CD4-positive, alpha-beta memory T cell (primary cell): ENCODE measurements at regions of chr5 and their contacts with region 1.

Region 1: DNA sequence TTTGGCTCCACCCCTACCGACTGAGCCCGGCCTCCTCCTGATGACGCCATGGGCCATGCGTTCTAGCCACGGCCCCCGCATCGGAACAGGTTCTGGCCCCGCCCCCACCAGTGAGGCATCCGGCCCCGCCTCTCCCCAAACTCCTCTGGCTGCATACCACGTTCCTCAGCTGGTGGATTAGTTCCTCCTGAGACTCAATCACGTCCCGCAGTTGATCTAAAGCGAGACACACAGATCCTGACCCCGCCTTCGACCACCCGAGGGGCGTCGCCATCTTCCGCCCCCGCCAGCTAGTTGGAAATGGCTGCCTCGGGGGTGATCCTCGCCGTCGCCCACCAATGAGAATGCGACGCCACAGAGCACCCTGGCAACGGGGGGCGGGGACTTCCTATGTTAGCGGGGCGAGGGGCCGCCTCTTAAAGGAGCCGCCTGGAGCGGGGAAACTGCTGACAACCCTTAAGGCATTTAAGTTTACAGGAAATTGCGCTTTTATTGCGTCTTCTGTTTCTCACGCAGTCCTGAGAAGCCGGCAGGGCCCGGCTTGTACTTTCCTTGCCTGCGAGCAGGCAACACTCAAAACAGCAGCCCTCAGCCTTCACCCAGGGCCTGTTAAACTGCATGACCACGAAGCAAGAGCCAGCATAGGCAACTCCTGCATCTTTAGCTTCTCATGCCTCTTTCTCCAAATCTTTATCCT is at the start of gene SPATA24:
- DNase-seq: peak; percentile 97 to 98 (median 98)
- H3K4me3 ChIP-seq: peak within 1 kb of the TSS; percentile 71 to 90
- H3K4me3 Mint-ChIP-seq: peak within 1 kb of the TSS; percentile 91 to 99 (median 94)
- H3K27ac ChIP-seq: peak within 1 kb of the TSS; percentile 85
- H3K27ac Mint-ChIP-seq: peak within 1 kb of the TSS; percentile 91 to 100 (median 99)
- H3K4me1 ChIP-seq: peaks cover 20% of the 10 kb centered on the region
- H3K4me1 Mint-ChIP-seq: peaks cover 16 to 31% (median 22%) of the 10 kb centered on the region in 4 donors
- H3K27me3 ChIP-seq: no peaks in the 10 kb centered on the region
- H3K27me3 Mint-ChIP-seq: no peaks in the 10 kb centered on the region
- total RNA-seq, gene SPATA24: 5.6 to 7.5 TPM

Region 2: DNA sequence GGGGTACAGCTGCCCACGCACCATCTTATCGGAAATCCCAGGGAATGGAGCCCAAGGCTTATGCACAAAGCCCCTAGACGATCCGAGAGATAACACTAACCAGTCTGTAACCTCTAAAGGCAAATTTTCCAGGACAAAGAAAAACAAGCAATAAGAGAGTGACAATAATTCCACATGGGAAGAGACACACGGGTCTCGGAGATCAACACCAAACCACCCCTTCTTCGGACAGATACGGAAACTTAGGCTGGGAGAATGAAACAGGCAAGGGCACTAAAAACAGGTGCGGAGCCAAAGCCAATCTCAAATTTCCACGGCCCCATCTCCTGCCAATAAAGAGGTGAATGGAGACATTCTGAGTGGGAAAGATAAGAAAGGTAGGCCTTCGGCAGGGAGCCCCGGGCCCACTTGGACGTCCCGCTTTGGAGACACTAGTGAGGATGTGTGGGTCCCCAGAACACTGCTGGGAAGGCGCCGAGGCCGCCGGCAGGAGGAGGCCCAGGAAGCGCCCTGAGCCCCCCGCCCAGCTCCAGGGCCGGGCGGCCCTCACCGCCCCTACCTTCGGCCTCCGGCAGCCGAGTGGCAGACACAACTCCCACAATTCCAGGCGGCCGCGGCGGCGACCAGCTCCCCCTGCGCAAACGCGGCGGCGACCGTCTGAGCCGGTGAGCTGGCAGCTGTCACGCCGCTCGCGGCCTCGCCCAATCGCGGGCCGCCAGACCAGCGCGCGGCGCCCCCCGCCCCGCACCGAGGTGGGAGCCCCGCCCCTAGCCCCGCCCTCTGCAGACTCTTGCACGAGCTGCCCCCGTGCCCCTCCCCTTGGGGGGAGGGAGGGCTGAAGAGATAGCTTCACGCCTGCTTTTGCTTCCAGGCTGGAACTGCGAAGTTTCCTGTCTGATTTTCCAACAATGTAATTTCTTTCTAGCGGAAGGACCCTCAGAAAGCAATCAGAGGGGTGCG is 205.9 kb before region 1 on chr5 and contains the start of gene SIL1:
- CTCF ChIA-PET with region 1: no interaction called
- POLR2A ChIA-PET with region 1: no interaction called
- intact Hi-C with region 1: loop called (anchors 5 kb)
- DNase-seq: peak; percentile 90 to 93 (median 91)
- H3K4me3 ChIP-seq: peak within 1 kb of the TSS; percentile 59 to 69
- H3K4me3 Mint-ChIP-seq: peak within 1 kb of the TSS; percentile 87 to 95 (median 89)
- H3K27ac ChIP-seq: peak within 1 kb of the TSS; percentile 86
- H3K27ac Mint-ChIP-seq: peak within 1 kb of the TSS; percentile 84 to 98 (median 94)
- H3K4me1 ChIP-seq: peaks cover 13% of the 10 kb centered on the region
- H3K4me1 Mint-ChIP-seq: peaks cover 13 to 29% (median 19%) of the 10 kb centered on the region in 4 donors
- H3K27me3 ChIP-seq: no peaks in the 10 kb centered on the region
- H3K27me3 Mint-ChIP-seq: no peaks in the 10 kb centered on the region
- total RNA-seq, gene SIL1: 16.4 to 16.7 TPM

Region 3: GRCh38 chr5:139415221-139415861 is 11.4 kb after region 1 on chr5:
- CTCF ChIA-PET with region 1: interaction called, 4 read pairs
- POLR2A ChIA-PET with region 1: interaction called, 11 read pairs
- intact Hi-C with region 1: no loop called
- DNase-seq: no peak
- H3K4me3 ChIP-seq: no peak overlapping the region
- H3K4me3 Mint-ChIP-seq: peak overlapping the region in 6 of 8 donors; percentile 21 to 66 (median 48)
- H3K27ac ChIP-seq: no peak overlapping the region
- H3K27ac Mint-ChIP-seq: peak overlapping the region in 4 of 7 donors; percentile 47 to 85 (median 73)
- H3K4me1 ChIP-seq: peaks cover 31% of the 10 kb centered on the region
- H3K4me1 Mint-ChIP-seq: peaks cover 13 to 33% (median 23%) of the 10 kb centered on the region in 4 donors
- H3K27me3 ChIP-seq: no peaks in the 10 kb centered on the region
- H3K27me3 Mint-ChIP-seq: no peaks in the 10 kb centered on the region

Region 4: DNA sequence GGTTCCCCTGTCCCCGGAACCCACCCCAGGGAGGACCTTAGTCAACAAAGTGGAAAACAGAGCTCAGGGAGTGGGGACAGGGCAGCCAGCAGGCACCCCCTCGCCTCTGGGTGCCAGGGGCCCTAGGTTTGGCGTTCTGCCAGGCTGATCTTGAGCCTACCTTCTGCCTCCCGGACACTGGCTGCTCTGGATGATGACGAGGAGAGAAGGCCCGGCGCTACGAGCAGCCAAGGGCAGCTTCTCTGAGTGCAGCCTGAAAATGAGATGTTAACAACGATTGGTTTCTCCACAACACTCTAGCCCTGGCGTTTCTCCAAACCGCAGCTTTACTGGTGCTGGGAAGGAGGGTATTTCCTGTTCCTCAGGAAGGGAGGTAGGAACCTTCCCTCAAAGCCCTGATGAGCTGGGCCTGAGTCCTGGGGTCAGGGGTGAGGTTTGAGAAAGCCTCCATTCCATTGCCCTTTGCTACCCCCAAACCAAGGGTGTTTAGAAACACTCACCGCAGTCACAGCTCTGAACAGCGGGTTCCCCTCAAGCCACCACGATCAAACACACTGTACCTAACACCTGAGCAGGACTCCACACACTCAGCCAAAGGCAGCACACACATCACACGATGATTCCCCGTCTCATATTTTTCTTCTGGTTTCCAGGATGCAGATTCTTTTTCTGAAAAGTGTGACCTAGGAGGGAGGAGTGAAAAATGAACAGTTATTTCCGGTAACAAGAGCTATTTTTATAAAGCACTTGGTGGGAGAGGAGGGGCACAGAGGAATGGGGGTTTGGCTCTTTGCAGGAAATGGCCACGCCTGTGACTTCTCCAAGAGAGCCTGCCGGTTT is 78.3 kb after region 1 on chr5 and contains the start of gene STING1:
- CTCF ChIA-PET with region 1: no interaction called
- POLR2A ChIA-PET with region 1: interaction called, 10 read pairs
- intact Hi-C with region 1: loop called (anchors 1 kb)
- DNase-seq: peak; percentile 78 to 83 (median 80)
- H3K4me3 ChIP-seq: peak within 1 kb of the TSS; percentile 82 to 95
- H3K4me3 Mint-ChIP-seq: peak within 1 kb of the TSS; percentile 92 to 98 (median 94)
- H3K27ac ChIP-seq: peak within 1 kb of the TSS; percentile 86
- H3K27ac Mint-ChIP-seq: peak within 1 kb of the TSS; percentile 90 to 98 (median 97)
- H3K4me1 ChIP-seq: peaks cover 46% of the 10 kb centered on the region
- H3K4me1 Mint-ChIP-seq: peaks cover 21 to 57% (median 39%) of the 10 kb centered on the region in 4 donors
- H3K27me3 ChIP-seq: no peaks in the 10 kb centered on the region
- H3K27me3 Mint-ChIP-seq: no peaks in the 10 kb centered on the region
- total RNA-seq, gene STING1: 141 to 144 TPM

Region 5: DNA sequence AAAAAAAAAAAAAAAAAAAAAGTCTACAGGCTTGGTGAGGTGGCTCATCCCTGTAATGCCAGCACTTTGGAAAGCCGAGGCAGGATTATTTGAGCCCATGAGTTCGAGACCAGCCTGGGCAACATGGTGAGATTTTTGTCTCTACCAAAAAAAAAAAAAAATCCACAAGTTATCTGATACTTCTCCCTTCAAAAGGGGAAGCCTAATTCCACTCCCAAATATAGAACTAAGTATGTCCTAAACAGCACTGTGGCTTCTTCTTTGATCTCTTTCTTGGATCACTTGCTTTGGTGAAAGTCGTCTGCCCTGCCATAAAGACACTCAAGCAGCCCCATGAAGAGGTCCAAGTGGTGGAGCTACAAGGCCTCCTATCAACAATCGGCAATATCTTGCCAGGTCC is 97.4 kb after region 1 on chr5:
- CTCF ChIA-PET with region 1: no interaction called
- POLR2A ChIA-PET with region 1: no interaction called
- intact Hi-C with region 1: no loop called
- DNase-seq: no peak
- H3K4me3 ChIP-seq: no peak overlapping the region
- H3K4me3 Mint-ChIP-seq: no peak overlapping the region
- H3K27ac ChIP-seq: no peak overlapping the region
- H3K27ac Mint-ChIP-seq: no peak overlapping the region
- H3K4me1 ChIP-seq: no peaks in the 10 kb centered on the region
- H3K4me1 Mint-ChIP-seq: no peaks in the 10 kb centered on the region
- H3K27me3 ChIP-seq: no peaks in the 10 kb centered on the region
- H3K27me3 Mint-ChIP-seq: no peaks in the 10 kb centered on the region

Region 6: GRCh38 chr5:139844472-139845145 is 440.7 kb after region 1 on chr5:
- CTCF ChIA-PET with region 1: no interaction called
- POLR2A ChIA-PET with region 1: no interaction called
- intact Hi-C with region 1: loop called (anchors 10 kb)
- DNase-seq: peak; percentile 52 to 69 (median 54)
- H3K4me3 ChIP-seq: no peak overlapping the region
- H3K4me3 Mint-ChIP-seq: peak overlapping the region in 2 of 8 donors; percentile 44 to 78
- H3K27ac ChIP-seq: no peak overlapping the region
- H3K27ac Mint-ChIP-seq: peak overlapping the region in 3 of 7 donors; percentile 16 to 88 (median 20)
- H3K4me1 ChIP-seq: peaks cover 8% of the 10 kb centered on the region
- H3K4me1 Mint-ChIP-seq: peaks cover 4 to 20% (median 12%) of the 10 kb centered on the region in 4 donors
- H3K27me3 ChIP-seq: peaks cover 9% of the 10 kb centered on the region
- H3K27me3 Mint-ChIP-seq: peaks cover 5 to 20% of the 10 kb centered on the region in 2 donors